GM18951 (cell line): ENCODE measurements at regions of chr11 and their contacts with region 1.

Region 1: GRCh38 chr11:33161120-33162005 is at the start of gene CSTF3:
- POLR2A ChIP-seq: peak; percentile 81

Region 2: DNA sequence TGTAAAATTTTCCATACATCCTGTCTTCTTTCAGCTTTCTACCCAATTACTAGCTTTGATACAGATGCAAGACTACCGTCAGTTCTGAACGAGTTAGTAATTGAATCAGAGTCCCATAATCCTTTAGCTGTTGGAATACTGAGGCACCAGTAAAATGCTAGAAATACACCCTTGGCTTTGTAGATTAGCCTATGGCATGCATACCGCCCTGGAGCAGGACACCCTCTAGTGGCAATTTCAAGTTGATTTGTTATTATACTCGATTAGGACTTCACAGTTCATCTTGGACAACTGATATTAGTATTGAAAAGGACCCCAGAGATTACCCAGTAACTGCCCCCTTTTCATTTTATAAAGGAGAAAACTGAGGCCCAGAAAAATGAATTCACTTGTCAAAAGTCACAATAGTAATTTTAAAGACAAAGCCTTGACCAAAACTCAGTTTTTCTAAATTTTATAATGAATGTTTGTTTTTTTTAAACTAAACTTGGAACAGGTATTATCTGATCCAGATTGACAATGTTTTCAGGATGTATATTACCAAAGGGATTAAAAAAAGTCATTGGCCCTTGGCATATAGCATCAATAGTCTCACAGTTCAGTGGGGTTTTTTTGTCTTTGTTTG is 168.5 kb after region 1 on chr11:
- in situ Hi-C with region 1: loop called (anchors 10 kb)
- POLR2A ChIP-seq: no peak